Heart left ventricle (tissue), 16 donors: ENCODE measurements at regions of chr16 and their contacts with region 1.

Region 1: DNA sequence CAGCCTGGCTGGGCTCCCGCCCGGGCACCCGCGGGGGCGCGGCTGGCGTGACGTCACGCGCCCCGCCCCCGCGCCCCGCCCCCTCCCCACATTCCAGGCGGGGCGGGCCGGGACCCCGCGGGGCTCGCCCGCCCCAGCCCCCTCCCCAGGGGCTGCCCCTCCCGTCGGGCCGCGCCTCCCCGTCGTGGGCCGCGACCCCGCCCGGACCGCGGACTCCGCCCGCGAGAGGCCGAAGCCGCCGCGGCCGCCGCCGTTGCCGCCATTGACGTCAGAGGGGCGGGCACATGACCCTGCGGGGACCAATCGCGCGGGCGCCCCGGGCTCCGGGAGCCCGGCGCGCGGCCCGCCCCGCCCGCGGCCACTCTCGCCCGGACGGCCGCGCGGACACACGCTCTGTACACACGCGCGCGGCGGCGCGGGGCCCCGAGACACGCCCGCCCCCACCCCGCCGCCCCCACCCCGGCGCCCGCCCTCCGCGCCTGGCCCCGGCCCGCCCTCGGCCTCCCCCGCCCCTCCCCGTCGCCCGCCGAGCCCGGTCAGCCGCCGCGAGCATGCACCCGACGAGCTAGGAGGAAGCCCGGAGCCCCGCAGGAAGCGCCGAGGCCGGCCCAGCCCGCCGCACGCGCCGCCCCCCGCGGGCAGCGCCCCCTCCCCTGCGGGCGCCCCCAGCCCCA is at the start of gene CMIP:
- DNase-seq: peak; percentile 88 to 92 (median 89)
- ATAC-seq: peak; percentile 35 to 92 (median 86)
- H3K4me3 ChIP-seq: peak within 1 kb of the TSS; percentile 54 to 96 (median 78)
- H3K27ac ChIP-seq: peak within 1 kb of the TSS; percentile 52 to 96 (median 81)
- H3K4me1 ChIP-seq: peaks cover 0 to 36% (median 17%) of the 10 kb centered on the region in 12 donors
- H3K27me3 ChIP-seq: no peaks in the 10 kb centered on the region
- CTCF ChIP-seq: no peak
- POLR2A ChIP-seq: no peak
- total RNA-seq, gene CMIP: 7.6 to 48.8 (median 16.3) TPM

Region 2: DNA sequence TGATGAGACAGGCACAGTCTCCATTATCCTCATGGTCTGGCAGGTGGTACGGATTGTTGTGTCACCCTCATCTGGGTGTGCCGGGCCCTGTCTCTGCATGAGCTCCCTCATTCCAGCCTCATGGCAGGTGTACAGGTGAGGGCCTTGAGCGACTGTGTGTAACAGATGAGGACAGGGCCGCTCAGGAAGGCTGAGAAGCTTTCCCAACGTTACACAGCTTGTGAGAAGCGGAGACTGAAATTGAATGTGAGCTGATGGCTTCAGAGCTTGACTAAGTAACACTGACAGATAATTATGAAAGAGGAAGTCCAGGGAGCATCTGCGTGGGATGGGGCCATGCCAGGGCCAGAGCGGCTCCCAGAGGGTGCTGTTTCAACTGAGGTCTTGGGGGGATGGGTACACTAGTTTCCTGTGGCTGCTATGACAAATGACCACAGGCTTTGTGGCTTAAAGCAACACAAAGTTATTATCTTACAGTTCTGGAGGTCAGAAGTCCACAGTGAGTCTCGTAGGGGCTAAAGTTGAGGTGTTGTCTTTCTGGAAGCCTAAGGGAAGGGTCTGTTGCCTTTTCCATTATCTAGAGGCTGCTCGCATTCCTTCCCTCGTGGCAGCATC is 36.7 kb after region 1 on chr16:
- intact Hi-C with region 1: loop called in 1 of 10 experiments (anchors 5 kb)
- DNase-seq: peak; percentile 57 to 80 (median 68)
- ATAC-seq: peak; percentile 44 to 76 (median 63)
- H3K4me3 ChIP-seq: peak overlapping the region in 1 of 12 donors; percentile 6
- H3K27ac ChIP-seq: peak overlapping the region in 6 of 12 donors; percentile 17 to 90 (median 40)
- H3K4me1 ChIP-seq: peaks cover 0 to 93% (median 36%) of the 10 kb centered on the region in 12 donors
- H3K27me3 ChIP-seq: no peaks in the 10 kb centered on the region
- CTCF ChIP-seq: no peak
- POLR2A ChIP-seq: no peak

Region 3: DNA sequence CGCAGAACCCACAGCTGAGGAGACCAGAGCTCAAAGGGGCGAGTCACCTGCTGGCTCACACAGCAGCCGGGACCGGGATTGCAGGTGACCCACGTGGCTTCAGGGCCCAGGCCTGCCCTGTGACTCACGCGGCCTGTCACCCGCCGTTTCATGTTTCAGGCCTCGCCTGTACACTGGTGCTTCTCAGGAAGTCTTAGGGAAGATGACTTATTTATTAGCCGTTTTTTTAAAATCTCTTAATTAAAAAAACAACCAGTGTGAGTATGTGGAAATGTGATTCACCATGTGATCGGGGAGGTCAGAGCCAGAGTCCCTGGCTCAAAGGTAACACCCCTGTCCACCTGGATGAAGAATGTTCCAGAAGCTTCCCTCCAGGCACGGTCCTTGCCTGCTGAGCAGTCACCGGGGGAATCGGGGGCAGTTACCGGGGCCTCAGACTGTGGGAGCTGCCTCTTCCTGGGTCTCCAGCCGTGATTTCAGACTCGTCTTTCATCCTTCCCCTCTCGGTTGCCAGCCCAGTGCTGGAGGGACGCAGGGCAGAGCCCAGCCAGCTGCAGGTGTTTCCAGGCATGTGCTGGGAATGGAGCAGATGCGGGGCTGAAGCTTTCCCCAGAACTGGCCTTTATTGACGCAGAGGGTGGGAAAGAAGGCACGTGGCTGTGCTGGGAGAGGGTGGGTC is 49.3 kb after region 1 on chr16:
- intact Hi-C with region 1: loop called in 1 of 10 experiments (anchors 5 kb)
- DNase-seq: peak in 1 of 5 donors; percentile 24
- ATAC-seq: peak; percentile 30 to 85 (median 54)
- H3K4me3 ChIP-seq: no peak overlapping the region
- H3K27ac ChIP-seq: peak overlapping the region in 11 of 12 donors; percentile 13 to 81 (median 74)
- H3K4me1 ChIP-seq: peaks cover 3 to 96% (median 47%) of the 10 kb centered on the region in 12 donors
- H3K27me3 ChIP-seq: no peaks in the 10 kb centered on the region
- CTCF ChIP-seq: no peak
- POLR2A ChIP-seq: no peak

Region 4: GRCh38 chr16:81623363-81624102 is 178.9 kb after region 1 on chr16:
- intact Hi-C with region 1: loop called in 3 of 10 experiments (anchors 5 to 10 kb)
- DNase-seq: peak in 1 of 5 donors; percentile 29
- ATAC-seq: no peak
- H3K4me3 ChIP-seq: no peak overlapping the region
- H3K27ac ChIP-seq: no peak overlapping the region
- H3K4me1 ChIP-seq: peaks cover 0 to 18% (median 13%) of the 10 kb centered on the region in 12 donors
- H3K27me3 ChIP-seq: no peaks in the 10 kb centered on the region
- CTCF ChIP-seq: peak; percentile 39 to 67 (median 55)
- POLR2A ChIP-seq: no peak